Natural killer cell (primary cell): ENCODE measurements at regions of chr5 and their contacts with region 1.

Region 1: DNA sequence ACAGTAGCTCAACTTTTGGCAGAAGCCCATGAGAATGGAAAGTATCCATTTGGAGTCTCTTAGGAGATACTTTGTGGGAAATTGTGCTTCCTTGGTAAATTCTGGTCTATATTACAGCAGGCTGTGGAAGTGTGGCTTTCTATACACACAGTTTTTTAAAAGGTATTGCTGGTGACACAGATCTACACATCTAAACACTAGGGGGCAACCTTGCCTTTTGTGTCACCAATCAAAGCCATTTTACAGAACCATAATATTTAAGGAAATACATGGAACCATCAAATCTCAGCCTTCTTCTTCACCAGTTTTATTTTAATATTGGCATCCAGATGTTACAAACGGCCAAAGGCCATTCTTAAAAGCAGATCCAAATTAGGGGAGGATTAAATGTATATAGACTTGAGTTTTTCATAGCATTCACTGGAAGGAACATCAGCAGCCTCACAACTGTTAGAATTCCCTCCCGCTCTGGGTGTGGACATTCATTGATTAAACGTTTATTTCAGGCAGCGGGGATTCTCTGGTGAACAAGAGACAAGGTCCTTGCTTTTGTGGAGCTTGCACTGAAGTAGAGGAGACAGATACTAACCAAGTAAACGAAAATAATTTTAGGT is 132.4 kb upstream of the EPB41L4A start:
- DNase-seq: peak in 1 of 2 donors; percentile 76
- ATAC-seq: peak; percentile 57 to 65 (median 58)
- H3K4me3 ChIP-seq: no peak overlapping the region
- H3K4me3 Mint-ChIP-seq: no peak overlapping the region
- H3K27ac ChIP-seq: no peak overlapping the region
- H3K27ac Mint-ChIP-seq: no peak overlapping the region
- H3K4me1 ChIP-seq: no peaks in the 10 kb centered on the region
- H3K4me1 Mint-ChIP-seq: peaks cover 0 to 5% of the 10 kb centered on the region in 2 donors
- H3K27me3 ChIP-seq: no peaks in the 10 kb centered on the region
- H3K27me3 Mint-ChIP-seq: peaks cover 6 to 11% of the 10 kb centered on the region in 2 donors
- CTCF ChIP-seq: peak; percentile 81

Region 2: GRCh38 chr5:112329419-112330090 is 222.0 kb before region 1 on chr5:
- intact Hi-C with region 1: no loop called
- DNase-seq: peak in 1 of 2 donors; percentile 2
- ATAC-seq: peak; percentile 21 to 43 (median 35)
- H3K4me3 ChIP-seq: no peak overlapping the region
- H3K4me3 Mint-ChIP-seq: no peak overlapping the region
- H3K27ac ChIP-seq: no peak overlapping the region
- H3K27ac Mint-ChIP-seq: no peak overlapping the region
- H3K4me1 ChIP-seq: peaks cover 4% of the 10 kb centered on the region
- H3K4me1 Mint-ChIP-seq: peaks cover 7 to 24% of the 10 kb centered on the region in 2 donors
- H3K27me3 ChIP-seq: peaks cover 3% of the 10 kb centered on the region
- H3K27me3 Mint-ChIP-seq: peaks cover 0 to 6% of the 10 kb centered on the region in 2 donors
- CTCF ChIP-seq: no peak

Region 3: GRCh38 chr5:112604732-112605630 is 53.5 kb after region 1 on chr5:
- intact Hi-C with region 1: loop called (anchors 1 kb)
- DNase-seq: no peak
- ATAC-seq: peak in 2 of 3 donors; percentile 66 to 70
- H3K4me3 ChIP-seq: no peak overlapping the region
- H3K4me3 Mint-ChIP-seq: no peak overlapping the region
- H3K27ac ChIP-seq: no peak overlapping the region
- H3K27ac Mint-ChIP-seq: no peak overlapping the region
- H3K4me1 ChIP-seq: no peaks in the 10 kb centered on the region
- H3K4me1 Mint-ChIP-seq: peaks cover 0 to 16% of the 10 kb centered on the region in 2 donors
- H3K27me3 ChIP-seq: no peaks in the 10 kb centered on the region
- H3K27me3 Mint-ChIP-seq: peaks cover 5 to 27% of the 10 kb centered on the region in 2 donors
- CTCF ChIP-seq: peak; percentile 21

Region 4: DNA sequence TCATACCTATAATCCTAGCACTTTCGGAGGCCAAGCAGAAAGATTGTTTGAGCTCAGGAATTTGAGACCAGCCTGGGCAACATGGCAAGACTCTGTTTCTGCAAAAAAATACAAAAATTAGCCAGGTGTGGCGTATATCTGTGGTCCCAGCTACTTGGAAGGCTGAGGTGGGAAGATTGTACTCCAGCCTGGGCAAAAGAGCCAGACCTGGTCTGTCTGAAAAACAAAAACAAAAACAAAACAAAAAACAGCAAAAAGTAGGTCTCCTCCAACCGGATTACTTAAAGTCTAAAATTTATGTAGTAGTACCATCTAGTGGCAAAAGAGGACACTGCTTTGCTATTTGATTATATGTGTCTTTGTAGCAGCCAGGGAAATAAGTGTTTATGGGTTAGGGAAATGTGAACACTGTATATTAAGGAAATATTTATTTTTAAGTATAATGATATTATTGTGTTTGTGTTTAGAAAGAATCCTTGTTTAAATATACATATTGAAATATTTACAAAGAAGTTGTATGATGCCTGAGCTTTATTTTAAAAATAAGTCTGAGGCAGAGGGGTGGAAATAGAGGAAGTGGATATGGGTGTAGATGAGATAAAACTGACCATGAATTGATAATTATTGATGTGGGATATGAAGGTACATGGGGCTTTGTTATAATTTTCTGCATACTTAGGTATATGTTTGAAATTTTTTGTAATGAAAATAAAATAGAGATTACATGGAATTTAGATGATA is 206.1 kb after region 1 on chr5:
- intact Hi-C with region 1: loop called (anchors 1 kb)
- DNase-seq: peak in 1 of 2 donors; percentile 77
- ATAC-seq: peak; percentile 83 to 95 (median 90)
- H3K4me3 ChIP-seq: no peak overlapping the region
- H3K4me3 Mint-ChIP-seq: no peak overlapping the region
- H3K27ac ChIP-seq: peak overlapping the region; percentile 1
- H3K27ac Mint-ChIP-seq: peak overlapping the region; percentile 29 to 45
- H3K4me1 ChIP-seq: no peaks in the 10 kb centered on the region
- H3K4me1 Mint-ChIP-seq: peaks cover 9 to 15% of the 10 kb centered on the region in 2 donors
- H3K27me3 ChIP-seq: no peaks in the 10 kb centered on the region
- H3K27me3 Mint-ChIP-seq: no peaks in the 10 kb centered on the region
- CTCF ChIP-seq: peak; percentile 92

Region 5: DNA sequence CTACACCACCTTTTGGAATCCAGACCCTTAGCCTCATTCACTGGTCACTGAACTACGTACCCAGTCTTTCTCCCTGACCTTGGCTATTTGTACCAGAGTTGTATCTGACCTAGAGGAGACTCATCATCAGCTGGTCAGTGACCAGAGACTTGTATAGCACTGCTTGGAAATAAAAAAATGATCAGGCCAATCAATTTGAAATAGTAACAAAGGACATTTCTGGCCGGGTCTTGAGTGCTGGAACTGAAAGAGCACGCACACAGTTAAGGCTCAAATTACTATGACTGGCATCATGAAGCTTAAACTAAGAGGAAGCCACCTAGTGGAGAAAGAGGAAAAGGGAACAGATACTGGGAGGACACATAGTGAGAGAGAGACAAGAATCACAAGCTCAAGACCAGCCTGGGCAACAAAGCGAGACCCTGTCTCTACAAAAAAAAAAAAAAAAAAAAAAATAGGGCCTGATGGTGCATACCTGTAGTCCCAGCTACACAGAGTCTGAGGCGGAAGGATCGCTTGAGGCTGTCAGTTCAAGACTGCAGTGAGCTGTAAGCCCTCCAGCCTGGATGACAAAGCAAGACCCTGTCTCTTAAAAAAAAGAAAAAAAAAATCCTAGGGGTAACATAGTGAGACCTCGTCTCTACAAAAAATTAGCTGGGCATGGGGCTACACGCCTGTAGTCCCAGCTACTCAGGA is 296.7 kb after region 1 on chr5:
- intact Hi-C with region 1: loop called (anchors 2 kb)
- DNase-seq: peak in 1 of 2 donors; percentile 69
- ATAC-seq: peak; percentile 83 to 99 (median 95)
- H3K4me3 ChIP-seq: no peak overlapping the region
- H3K4me3 Mint-ChIP-seq: no peak overlapping the region
- H3K27ac ChIP-seq: no peak overlapping the region
- H3K27ac Mint-ChIP-seq: no peak overlapping the region
- H3K4me1 ChIP-seq: no peaks in the 10 kb centered on the region
- H3K4me1 Mint-ChIP-seq: peaks cover 6 to 7% of the 10 kb centered on the region in 2 donors
- H3K27me3 ChIP-seq: no peaks in the 10 kb centered on the region
- H3K27me3 Mint-ChIP-seq: peaks cover 0 to 2% of the 10 kb centered on the region in 2 donors
- CTCF ChIP-seq: peak; percentile 66

Region 6: DNA sequence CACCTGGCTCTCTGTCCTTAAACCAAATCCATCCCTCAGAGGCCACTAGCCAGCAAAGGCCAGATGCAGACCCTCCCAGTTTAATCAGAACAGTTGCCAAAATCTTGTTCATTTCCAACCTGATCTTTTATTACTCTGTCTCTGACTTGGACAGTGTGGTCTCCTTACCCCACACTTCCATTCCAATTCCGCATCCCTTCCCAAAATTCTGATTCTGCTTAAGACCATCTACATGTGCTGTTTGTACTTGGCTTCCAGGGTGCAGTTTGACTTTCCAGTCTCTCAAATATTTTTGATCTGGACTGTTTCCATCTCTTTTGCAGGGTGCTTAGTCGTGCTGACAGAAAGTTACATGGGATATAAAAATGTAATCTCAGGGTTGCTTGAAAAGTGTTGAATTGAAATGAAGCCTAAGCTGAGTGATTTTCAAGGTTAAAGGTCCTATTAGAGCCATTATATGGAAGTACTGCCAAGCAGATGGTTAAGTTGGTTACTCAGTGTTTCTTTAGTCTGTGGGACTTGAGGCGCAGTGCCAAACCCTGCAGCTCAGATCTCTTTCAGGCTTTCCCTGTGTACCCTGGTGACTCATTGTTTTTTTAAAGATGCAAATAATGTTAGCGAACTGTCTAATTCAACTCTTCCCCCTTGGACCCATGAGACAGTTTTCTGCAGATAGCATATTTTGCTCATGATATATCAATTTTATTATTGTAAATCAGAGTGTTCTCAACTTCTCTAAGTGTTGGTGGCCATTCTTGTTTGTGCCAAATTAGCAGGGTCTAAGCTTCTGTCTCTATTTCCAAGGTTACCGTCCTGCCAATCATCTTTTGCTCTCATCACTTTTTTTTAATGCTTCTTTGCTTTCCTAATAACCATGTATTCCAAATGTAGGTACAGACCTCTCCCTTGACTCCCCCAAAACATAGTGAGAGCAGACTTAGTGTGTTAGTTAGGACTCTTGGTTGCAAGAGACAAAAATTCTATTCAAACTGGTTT is 406.9 kb after region 1 on chr5:
- intact Hi-C with region 1: loop called (anchors 2 kb)
- DNase-seq: no peak
- ATAC-seq: no peak
- H3K4me3 ChIP-seq: no peak overlapping the region
- H3K4me3 Mint-ChIP-seq: no peak overlapping the region
- H3K27ac ChIP-seq: no peak overlapping the region
- H3K27ac Mint-ChIP-seq: no peak overlapping the region
- H3K4me1 ChIP-seq: no peaks in the 10 kb centered on the region
- H3K4me1 Mint-ChIP-seq: no peaks in the 10 kb centered on the region
- H3K27me3 ChIP-seq: no peaks in the 10 kb centered on the region
- H3K27me3 Mint-ChIP-seq: peaks cover 4 to 5% of the 10 kb centered on the region in 2 donors
- CTCF ChIP-seq: no peak